ENCODE measurements at regions of chr2 and their contacts with region 1.

Region 1: DNA sequence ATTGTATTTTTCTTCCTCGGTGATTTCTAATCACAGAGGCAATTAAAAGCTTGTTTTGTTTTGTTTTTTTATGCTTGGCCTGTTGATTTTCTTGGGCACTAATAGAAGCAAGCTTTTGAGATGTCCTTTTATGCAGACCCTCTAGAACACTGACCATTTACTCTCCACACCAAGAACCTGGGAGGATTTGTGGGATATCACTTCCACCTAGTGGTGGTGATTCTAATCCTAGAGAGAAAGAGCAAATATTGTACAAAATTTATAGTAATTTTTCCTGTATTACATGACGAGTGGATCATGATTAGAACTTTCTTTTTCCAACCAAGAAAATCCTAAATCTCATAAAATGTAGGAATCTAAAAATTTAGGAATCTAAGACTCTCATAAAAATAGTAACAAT is 23.4 kb downstream of the NEMP2 start:
- DNase-seq: no peak
- ATAC-seq: peak in 2 of 4 donors; percentile 36 to 47
- H3K4me3 ChIP-seq: no peak overlapping the region
- H3K27ac ChIP-seq: no peak overlapping the region
- H3K4me1 ChIP-seq: no peaks in the 10 kb centered on the region
- H3K27me3 ChIP-seq: no peaks in the 10 kb centered on the region
- CTCF ChIP-seq: peak in 1 of 4 donors; percentile 19

Region 2: GRCh38 chr2:190396271-190396670 is 114.8 kb before region 1 on chr2:
- intact Hi-C with region 1: loop called in 1 of 3 experiments (anchors 5 kb)
- DNase-seq: no peak
- ATAC-seq: no peak
- H3K4me3 ChIP-seq: no peak overlapping the region
- H3K27ac ChIP-seq: no peak overlapping the region
- H3K4me1 ChIP-seq: no peaks in the 10 kb centered on the region
- H3K27me3 ChIP-seq: peaks cover 0 to 3% (median 0%) of the 10 kb centered on the region in 4 donors
- CTCF ChIP-seq: no peak